Posterior vena cava (tissue), 2 donors: ENCODE measurements at regions of chr9 and their contacts with region 1.

Region 1: GRCh38 chr9:25570802-25571201 is 107.4 kb downstream of the TUSC1 start:
- DNase-seq: no peak

Region 2: DNA sequence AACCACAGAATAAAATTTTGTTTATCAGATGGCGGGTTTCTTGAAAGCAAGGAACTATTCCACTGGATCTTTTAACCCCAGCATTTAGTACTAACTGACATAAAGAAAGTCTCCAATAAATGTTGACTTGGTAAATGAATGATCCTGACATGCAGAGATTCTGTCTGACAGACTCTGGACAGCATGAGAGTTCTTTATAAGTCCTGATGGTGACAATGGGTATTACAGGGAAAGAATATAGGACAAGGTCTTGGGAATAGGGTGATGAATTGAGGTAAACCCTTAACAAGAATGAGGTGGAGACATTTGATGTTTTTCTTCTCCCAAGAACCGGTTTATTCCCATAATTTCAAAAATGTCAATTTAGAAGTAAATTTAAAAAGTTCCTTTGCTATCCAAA is 346.5 kb before region 1 on chr9:
- intact Hi-C with region 1: no loop called
- DNase-seq: no peak

Region 3: DNA sequence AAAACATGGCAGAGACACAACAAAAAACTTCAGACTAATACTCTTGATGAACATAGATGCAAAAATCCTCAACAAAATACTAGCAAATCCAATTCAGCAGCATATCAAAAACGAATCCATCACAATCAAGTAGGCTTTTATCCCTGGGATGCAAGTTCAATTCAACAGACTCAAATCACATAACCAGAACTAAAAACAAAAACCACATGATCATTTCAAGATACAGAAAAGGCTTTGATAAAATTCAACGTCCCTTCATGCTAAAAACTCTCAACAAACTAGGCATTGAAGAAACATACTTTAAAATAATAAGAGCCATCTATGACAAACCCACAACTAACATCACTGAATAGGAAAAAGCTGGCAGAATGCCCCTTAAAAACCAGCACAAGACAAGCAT is 13.8 kb after region 1 on chr9:
- intact Hi-C with region 1: loop called in 1 of 2 experiments (anchors 1 kb)
- DNase-seq: no peak